Dendritic cell treated with granulocyte-macrophage colony-stimulating factor and Interleukin-4, amounts not matched to agents 40 ng/mL and 50 ng/mL, for 4 days (primary cell): ENCODE measurements at regions of chr9 and their contacts with region 1.

Region 1: DNA sequence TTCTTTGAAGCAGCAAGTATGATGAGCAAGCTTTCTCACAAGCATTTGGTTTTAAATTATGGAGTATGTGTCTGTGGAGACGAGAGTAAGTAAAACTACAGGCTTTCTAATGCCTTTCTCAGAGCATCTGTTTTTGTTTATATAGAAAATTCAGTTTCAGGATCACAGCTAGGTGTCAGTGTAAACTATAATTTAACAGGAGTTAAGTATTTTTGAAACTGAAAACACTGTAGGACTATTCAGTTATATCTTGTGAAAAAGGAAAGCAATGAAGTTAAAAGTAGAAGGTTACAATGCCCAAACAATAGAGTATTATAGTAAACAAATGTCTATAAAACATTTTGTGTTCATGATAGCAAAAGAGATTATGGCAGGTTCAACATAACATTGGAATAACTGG is 88.6 kb downstream of the JAK2 start:
- H3K4me3 Mint-ChIP-seq: no peak overlapping the region
- H3K27ac Mint-ChIP-seq: no peak overlapping the region
- H3K4me1 Mint-ChIP-seq: no peaks in the 10 kb centered on the region
- H3K27me3 Mint-ChIP-seq: no peaks in the 10 kb centered on the region

Region 2: DNA sequence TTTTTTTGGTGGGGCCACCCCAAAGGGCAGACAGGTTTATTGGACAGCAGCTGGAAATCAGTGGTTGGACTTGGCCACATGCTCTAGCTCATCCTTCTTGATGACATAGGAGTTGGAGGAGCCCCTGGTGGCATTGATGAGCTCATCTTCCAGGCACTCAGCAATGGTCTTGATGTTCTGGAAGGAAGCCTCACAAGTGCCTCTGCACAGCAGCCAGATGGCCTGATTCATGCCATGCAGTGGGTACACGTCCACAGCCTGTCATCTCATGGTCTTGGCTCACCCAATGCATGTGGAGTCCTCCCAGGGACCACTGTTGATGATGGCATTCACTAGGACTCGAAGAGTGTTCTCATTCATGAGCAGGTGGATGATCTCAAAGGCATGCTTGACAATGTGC is 292.3 kb before region 1 on chr9:
- intact Hi-C with region 1: no loop called
- H3K4me3 Mint-ChIP-seq: no peak overlapping the region
- H3K27ac Mint-ChIP-seq: no peak overlapping the region
- H3K4me1 Mint-ChIP-seq: peaks cover 5% of the 10 kb centered on the region
- H3K27me3 Mint-ChIP-seq: peaks cover 9% of the 10 kb centered on the region

Region 3: DNA sequence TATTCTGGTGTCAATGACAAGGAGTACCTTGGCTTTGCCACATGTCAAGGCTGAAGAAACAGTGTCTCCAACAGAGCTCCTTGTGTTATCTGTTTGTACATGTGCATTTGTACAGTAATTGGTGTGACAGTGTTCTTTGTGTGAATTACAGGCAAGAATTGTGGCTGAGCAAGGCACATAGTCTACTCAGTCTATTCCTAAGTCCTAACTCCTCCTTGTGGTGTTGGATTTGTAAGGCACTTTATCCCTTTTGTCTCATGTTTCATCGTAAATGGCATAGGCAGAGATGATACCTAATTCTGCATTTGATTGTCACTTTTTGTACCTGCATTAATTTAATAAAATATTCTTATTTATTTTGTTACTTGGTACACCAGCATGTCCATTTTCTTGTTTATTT is 396.4 kb after region 1 on chr9:
- intact Hi-C with region 1: no loop called
- H3K4me3 Mint-ChIP-seq: no peak overlapping the region
- H3K27ac Mint-ChIP-seq: no peak overlapping the region
- H3K4me1 Mint-ChIP-seq: peaks cover 59% of the 10 kb centered on the region
- H3K27me3 Mint-ChIP-seq: no peaks in the 10 kb centered on the region

Region 4: DNA sequence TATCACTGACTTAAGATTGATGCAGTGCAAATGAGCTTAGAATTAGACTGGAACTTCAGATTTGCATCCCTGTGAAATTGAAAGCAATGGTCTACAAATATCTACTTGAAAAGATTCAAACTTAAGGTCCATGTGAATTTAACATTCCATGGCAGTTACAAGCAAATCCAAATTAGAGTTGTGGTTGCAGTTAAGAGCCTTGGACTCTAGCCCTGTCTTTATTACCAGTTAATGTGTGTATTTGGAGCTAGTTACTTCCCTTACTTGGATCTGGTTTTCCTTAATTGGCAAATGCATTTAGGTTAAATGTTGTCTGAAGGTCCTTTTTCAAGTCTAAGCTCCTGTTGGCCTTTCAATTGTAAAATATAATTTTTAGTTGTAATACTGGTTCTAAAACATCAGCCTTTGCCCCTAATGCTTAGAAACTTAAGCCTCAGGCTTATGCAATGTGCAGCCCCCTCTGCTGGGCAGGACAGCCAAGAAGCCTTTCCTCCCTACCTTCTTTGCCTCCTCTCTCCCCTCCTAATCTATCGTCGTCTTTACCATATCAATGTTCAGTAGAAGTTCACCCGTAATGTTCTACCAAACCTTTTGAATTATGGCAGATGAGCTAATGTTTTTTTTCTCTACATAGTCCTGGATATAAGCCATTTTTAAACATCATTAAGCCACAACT is 699.8 kb after region 1 on chr9:
- intact Hi-C with region 1: loop called (anchors 10 kb)
- H3K4me3 Mint-ChIP-seq: no peak overlapping the region
- H3K27ac Mint-ChIP-seq: no peak overlapping the region
- H3K4me1 Mint-ChIP-seq: no peaks in the 10 kb centered on the region
- H3K27me3 Mint-ChIP-seq: no peaks in the 10 kb centered on the region